ENCODE measurements at regions of chr20 and their contacts with region 1.

Region 1: GRCh38 chr20:49508435-49509199 is 26.1 kb upstream of the KCNB1 start:
- DNase-seq: peak; percentile 46 to 73
- H3K4me3 ChIP-seq: no peak overlapping the region
- H3K4me3 Mint-ChIP-seq: no peak overlapping the region
- H3K27ac Mint-ChIP-seq: no peak overlapping the region
- H3K4me1 ChIP-seq: peaks cover 8% of the 10 kb centered on the region
- H3K4me1 Mint-ChIP-seq: no peaks in the 10 kb centered on the region
- H3K27me3 ChIP-seq: no peaks in the 10 kb centered on the region; the same call in 1 of the 2 replicates
- H3K27me3 Mint-ChIP-seq: peaks cover 7% of the 10 kb centered on the region
- CTCF ChIP-seq: peak; percentile 77 to 98

Region 2: DNA sequence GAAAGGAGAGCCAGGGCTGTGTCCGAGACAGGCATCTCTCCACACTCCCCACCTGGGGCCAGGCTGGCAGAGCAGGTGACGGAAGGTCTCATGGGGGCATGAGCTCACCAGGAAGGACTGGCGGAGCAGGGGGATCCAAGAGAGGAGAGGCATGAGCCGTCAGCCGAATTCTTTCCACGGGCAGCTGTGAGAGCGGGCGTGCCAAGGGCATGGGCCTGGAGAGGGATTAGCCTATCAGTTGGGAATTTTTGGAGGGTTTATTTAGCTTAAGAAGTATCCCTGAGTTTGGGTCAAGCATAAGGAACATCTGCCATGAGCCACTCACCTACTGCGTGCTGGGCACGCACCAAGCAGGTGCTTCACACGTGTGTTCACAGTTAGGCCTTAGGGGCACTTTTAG is 170.6 kb before region 1 on chr20:
- CTCF ChIA-PET with region 1: interaction called, 17 read pairs
- POLR2A ChIA-PET with region 1: no interaction called
- intact Hi-C with region 1: loop called (anchors 1 kb)
- DNase-seq: no peak
- H3K4me3 ChIP-seq: no peak overlapping the region
- H3K4me3 Mint-ChIP-seq: no peak overlapping the region
- H3K27ac Mint-ChIP-seq: no peak overlapping the region
- H3K4me1 ChIP-seq: peaks cover 4% of the 10 kb centered on the region
- H3K4me1 Mint-ChIP-seq: no peaks in the 10 kb centered on the region
- H3K27me3 ChIP-seq: peaks cover 1% of the 10 kb centered on the region; the same call in 1 of the 2 replicates
- H3K27me3 Mint-ChIP-seq: peaks cover 16% of the 10 kb centered on the region
- CTCF ChIP-seq: no peak

Region 3: DNA sequence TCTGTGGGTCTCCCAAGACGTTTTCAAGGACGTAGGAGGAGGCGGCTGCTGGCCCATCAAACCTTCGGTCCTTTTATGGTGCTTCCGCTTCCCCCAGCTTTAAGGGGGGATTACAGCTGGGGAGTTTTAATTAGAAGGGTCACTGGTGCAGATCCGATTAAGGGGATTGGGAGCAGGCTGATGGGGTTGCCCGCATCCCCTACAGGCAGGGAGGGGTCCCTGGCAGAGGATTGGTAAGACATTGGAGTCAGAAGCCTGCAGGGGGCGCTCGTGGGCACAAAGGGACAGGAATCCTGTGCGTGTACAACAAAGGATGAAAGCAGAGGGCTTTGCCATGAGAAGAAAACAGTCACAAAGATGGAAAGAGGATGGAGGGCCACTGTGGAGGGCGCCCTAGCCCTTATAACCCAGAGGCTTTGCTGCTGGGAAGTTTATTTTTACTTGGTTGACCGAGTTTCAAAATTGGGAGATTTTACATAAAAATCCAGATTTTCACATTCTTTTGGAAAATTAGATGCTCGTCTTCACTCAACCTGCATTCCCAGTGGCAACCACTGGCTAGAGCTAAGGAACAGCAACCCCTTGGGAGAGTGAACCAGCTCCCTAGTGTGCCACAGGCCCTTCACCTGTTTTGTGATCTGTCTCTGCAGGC is 124.1 kb before region 1 on chr20:
- CTCF ChIA-PET with region 1: interaction called, 5 read pairs
- POLR2A ChIA-PET with region 1: no interaction called
- intact Hi-C with region 1: loop called (anchors 1 kb)
- DNase-seq: peak; percentile 87 to 91
- H3K4me3 ChIP-seq: no peak overlapping the region
- H3K4me3 Mint-ChIP-seq: no peak overlapping the region
- H3K27ac Mint-ChIP-seq: no peak overlapping the region
- H3K4me1 ChIP-seq: no peaks in the 10 kb centered on the region
- H3K4me1 Mint-ChIP-seq: no peaks in the 10 kb centered on the region
- H3K27me3 ChIP-seq: no peaks in the 10 kb centered on the region
- H3K27me3 Mint-ChIP-seq: peaks cover 20% of the 10 kb centered on the region
- CTCF ChIP-seq: peak; percentile 93 to 96

Region 4: GRCh38 chr20:49496553-49497397 is 11.8 kb before region 1 on chr20:
- CTCF ChIA-PET with region 1: interaction called, 10 read pairs
- POLR2A ChIA-PET with region 1: interaction called, 3 read pairs
- intact Hi-C with region 1: no loop called
- DNase-seq: no peak
- H3K4me3 ChIP-seq: no peak overlapping the region
- H3K4me3 Mint-ChIP-seq: no peak overlapping the region
- H3K27ac Mint-ChIP-seq: no peak overlapping the region
- H3K4me1 ChIP-seq: peaks cover 11% of the 10 kb centered on the region; the same call in 1 of the 2 replicates
- H3K4me1 Mint-ChIP-seq: peaks cover 9% of the 10 kb centered on the region
- H3K27me3 ChIP-seq: no peaks in the 10 kb centered on the region
- H3K27me3 Mint-ChIP-seq: peaks cover 6% of the 10 kb centered on the region
- CTCF ChIP-seq: no peak

Region 5: DNA sequence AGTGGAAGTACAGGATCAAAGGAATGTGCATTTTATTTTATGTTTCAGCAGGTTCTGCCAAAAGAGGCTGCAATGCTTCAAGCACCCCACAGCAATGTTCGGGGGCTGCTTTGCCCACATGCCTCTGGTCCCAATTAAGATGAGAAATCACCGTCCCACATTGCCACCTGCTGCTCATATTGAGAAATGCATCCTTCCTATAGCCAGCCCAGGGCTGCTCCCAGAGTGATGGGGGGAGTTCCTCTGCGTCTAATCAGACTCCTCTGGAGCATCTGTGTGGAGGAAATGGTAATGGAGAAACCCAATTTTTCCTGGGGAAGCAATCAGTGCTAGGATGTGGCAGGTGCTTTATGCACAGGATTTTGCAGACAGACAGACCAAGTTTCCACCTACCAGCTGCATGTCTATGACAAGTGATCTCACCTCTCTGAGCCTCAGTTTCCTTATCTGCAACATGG is 25.7 kb after region 1 on chr20:
- CTCF ChIA-PET with region 1: interaction called, 3 read pairs
- POLR2A ChIA-PET with region 1: no interaction called
- intact Hi-C with region 1: loop called (anchors 1 kb)
- DNase-seq: peak; percentile 81 to 88
- H3K4me3 ChIP-seq: no peak overlapping the region
- H3K4me3 Mint-ChIP-seq: no peak overlapping the region
- H3K27ac Mint-ChIP-seq: no peak overlapping the region
- H3K4me1 ChIP-seq: no peaks in the 10 kb centered on the region
- H3K4me1 Mint-ChIP-seq: no peaks in the 10 kb centered on the region
- H3K27me3 ChIP-seq: no peaks in the 10 kb centered on the region
- H3K27me3 Mint-ChIP-seq: peaks cover 4% of the 10 kb centered on the region
- CTCF ChIP-seq: peak; percentile 93 to 99

Measured in Caco-2 (cell line).